ENCODE measurements at regions of chr21 and their contacts with region 1.

Region 1: GRCh38 chr21:31866077-31866511 is 6.7 kb upstream of the HUNK start:
- DNase-seq: no peak
- H3K4me3 ChIP-seq: no peak overlapping the region
- H3K27ac ChIP-seq: no peak overlapping the region
- H3K4me1 ChIP-seq: peaks cover 0 to 7% (median 7%) of the 10 kb centered on the region in 3 donors
- H3K27me3 ChIP-seq: peaks cover 0 to 49% (median 0%) of the 10 kb centered on the region in 4 donors
- CTCF ChIP-seq: peak; percentile 71 to 94 (median 84)
- POLR2A ChIP-seq: no peak

Region 2: DNA sequence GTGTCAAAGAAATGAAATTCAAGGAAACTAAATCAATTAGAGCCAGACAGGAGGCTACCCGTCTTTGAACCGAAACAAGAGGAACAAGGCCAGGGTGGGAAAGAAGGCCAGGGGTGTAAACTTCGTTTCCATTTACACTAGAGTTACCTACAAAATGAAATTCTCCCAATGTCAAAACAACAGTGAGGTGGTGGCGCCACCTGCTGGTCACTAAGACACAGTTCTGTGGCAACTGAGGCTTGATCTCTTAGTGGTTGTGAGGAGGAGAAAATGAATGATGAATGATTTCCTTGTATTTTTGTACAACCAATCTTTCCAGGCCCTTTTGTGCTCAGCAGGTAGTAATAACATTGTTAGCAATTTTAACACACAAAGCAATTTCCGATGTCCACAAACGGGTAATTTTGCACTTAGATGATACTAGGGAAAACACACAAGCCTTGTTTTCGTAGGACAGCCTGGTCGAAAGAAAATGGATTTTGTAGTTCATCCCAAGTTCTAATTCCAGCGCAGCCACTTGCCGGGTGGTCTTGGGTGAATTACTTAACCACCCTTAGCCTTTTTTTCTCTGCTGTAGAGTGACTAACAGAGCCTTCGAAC is 261.4 kb before region 1 on chr21:
- intact Hi-C with region 1: no loop called
- DNase-seq: no peak
- H3K4me3 ChIP-seq: no peak overlapping the region
- H3K27ac ChIP-seq: no peak overlapping the region
- H3K4me1 ChIP-seq: peaks cover 0 to 5% (median 0%) of the 10 kb centered on the region in 3 donors
- H3K27me3 ChIP-seq: peaks cover 0 to 4% (median 0%) of the 10 kb centered on the region in 4 donors
- CTCF ChIP-seq: peak; percentile 73 to 93 (median 86)
- POLR2A ChIP-seq: no peak

Region 3: GRCh38 chr21:31696424-31696823 is 169.7 kb before region 1 on chr21:
- intact Hi-C with region 1: no loop called
- DNase-seq: no peak
- H3K4me3 ChIP-seq: no peak overlapping the region
- H3K27ac ChIP-seq: no peak overlapping the region
- H3K4me1 ChIP-seq: no peaks in the 10 kb centered on the region
- H3K27me3 ChIP-seq: no peaks in the 10 kb centered on the region
- CTCF ChIP-seq: no peak
- POLR2A ChIP-seq: no peak

Region 4: GRCh38 chr21:31786164-31786920 is 79.8 kb before region 1 on chr21:
- intact Hi-C with region 1: loop called (anchors 5 kb)
- DNase-seq: no peak
- H3K4me3 ChIP-seq: no peak overlapping the region
- H3K27ac ChIP-seq: no peak overlapping the region
- H3K4me1 ChIP-seq: peaks cover 0 to 7% (median 0%) of the 10 kb centered on the region in 3 donors
- H3K27me3 ChIP-seq: peaks cover 0 to 3% (median 0%) of the 10 kb centered on the region in 4 donors
- CTCF ChIP-seq: no peak
- POLR2A ChIP-seq: no peak

Region 5: GRCh38 chr21:32102426-32102825 is 236.3 kb after region 1 on chr21:
- intact Hi-C with region 1: no loop called
- DNase-seq: no peak
- H3K4me3 ChIP-seq: no peak overlapping the region
- H3K27ac ChIP-seq: no peak overlapping the region
- H3K4me1 ChIP-seq: no peaks in the 10 kb centered on the region
- H3K27me3 ChIP-seq: no peaks in the 10 kb centered on the region
- CTCF ChIP-seq: no peak
- POLR2A ChIP-seq: no peak

Region 6: DNA sequence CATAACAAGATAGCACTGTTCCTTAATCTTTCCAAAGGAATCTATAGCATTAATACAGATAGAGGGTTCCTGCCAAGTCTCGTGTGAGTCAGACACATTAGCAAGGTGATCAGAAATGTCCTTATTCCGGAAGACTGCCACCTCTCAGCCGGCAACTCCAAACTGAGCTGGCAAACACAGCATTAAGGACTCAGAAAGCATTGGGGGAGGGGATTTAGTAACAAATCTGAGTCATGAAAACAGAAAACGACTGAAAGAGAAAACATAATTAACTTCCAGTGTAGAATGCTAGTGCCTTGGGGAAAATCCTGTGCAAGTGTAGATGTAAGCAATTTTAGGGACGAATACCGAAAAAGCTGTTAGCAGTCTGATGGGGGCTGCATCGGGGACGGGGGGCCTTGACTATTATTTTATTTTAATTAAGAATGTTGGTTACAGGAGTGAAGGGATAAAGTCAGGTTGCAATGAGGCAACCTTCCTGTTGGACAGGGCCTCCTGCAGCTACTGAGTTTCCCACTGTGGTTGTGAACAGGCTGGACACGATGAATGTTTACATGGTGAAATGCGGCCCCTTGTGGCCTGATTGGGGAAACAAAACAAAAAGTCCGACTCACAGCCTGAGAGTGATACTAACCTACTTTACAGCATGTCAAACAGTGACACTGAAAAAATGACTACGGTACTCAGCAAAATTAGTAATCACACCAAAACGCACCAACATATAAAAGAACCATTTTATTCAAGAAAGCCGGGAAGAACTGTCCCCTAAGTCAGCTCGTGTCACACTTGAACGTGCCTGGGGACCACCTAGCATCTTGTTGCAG is 392.1 kb after region 1 on chr21:
- intact Hi-C with region 1: loop called (anchors 5 kb)
- DNase-seq: no peak
- H3K4me3 ChIP-seq: no peak overlapping the region
- H3K27ac ChIP-seq: no peak overlapping the region
- H3K4me1 ChIP-seq: peaks cover 0 to 25% (median 4%) of the 10 kb centered on the region in 3 donors
- H3K27me3 ChIP-seq: peaks cover 0 to 3% (median 0%) of the 10 kb centered on the region in 4 donors
- CTCF ChIP-seq: peak; percentile 39 to 84 (median 74)
- POLR2A ChIP-seq: no peak

Region 7: DNA sequence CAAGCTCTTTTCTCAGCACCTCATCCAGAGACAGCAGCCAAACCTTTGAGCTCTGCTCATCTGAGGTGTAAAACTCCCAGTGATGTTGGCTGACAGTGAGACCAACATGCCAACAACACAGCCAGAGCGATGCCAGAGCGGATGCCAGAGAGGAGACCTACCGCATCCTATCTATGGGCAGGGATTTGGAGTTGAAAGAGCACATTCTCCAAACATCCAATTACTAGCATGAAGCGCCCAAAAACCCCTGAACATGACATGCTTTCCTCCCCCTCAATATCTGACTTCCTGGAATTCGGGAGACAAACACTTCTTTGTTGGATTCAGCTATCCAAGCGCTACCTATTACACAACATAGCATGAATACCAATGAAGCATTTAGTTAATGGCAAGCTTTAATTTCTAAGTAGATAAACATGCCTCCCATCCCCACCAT is 928.6 kb after region 1 on chr21:
- intact Hi-C with region 1: no loop called
- DNase-seq: no peak
- H3K4me3 ChIP-seq: no peak overlapping the region
- H3K27ac ChIP-seq: no peak overlapping the region
- H3K4me1 ChIP-seq: peaks cover 0 to 5% (median 0%) of the 10 kb centered on the region in 3 donors
- H3K27me3 ChIP-seq: no peaks in the 10 kb centered on the region
- CTCF ChIP-seq: no peak
- POLR2A ChIP-seq: no peak